Sciatic nerve (tissue), 2 donors: ENCODE measurements at regions of chr1 and their contacts with region 1.

Region 1: GRCh38 chr1:32773018-32773763 is 44.0 kb downstream of the YARS1 start:
- DNase-seq: peak; percentile 89
- ATAC-seq: peak; percentile 81

Region 2: DNA sequence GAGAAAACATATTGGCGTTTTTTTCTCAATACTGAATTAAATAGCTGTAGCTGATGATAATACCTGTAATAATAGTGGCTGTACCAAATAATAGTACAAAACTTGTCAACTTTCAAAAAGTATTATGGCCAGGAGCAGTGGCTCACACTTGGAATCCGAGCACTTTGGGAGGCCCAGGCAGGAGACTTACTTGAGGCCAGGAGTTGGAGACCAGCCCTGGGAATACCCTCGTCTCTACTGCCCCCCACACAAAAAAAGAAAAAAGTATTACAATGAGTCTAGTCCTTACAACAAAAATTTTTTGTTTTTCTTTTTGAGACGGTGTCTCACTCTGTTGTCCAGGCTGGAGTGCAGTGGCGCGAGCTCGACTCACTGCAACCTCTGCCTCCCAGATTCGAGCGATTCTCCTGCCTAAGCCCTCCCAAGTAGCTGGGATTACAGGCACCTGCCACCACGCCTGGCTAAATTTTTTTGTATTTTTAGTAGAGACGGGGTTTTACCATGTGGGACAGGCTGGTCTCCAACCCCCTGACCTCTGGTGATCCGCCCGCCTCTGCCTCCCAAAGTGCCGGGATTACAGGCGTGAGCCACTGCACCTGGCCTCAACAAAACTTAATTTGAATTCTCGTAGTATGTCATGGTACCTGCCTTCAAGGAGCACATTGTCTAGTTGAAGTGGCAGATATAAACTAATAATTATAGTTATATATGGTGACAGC is 120.8 kb before region 1 on chr1:
- intact Hi-C with region 1: no loop called
- DNase-seq: no peak
- ATAC-seq: no peak

Region 3: GRCh38 chr1:32714277-32714676 is 58.9 kb before region 1 on chr1:
- intact Hi-C with region 1: loop called (anchors 5 kb)
- DNase-seq: no peak
- ATAC-seq: no peak

Region 4: DNA sequence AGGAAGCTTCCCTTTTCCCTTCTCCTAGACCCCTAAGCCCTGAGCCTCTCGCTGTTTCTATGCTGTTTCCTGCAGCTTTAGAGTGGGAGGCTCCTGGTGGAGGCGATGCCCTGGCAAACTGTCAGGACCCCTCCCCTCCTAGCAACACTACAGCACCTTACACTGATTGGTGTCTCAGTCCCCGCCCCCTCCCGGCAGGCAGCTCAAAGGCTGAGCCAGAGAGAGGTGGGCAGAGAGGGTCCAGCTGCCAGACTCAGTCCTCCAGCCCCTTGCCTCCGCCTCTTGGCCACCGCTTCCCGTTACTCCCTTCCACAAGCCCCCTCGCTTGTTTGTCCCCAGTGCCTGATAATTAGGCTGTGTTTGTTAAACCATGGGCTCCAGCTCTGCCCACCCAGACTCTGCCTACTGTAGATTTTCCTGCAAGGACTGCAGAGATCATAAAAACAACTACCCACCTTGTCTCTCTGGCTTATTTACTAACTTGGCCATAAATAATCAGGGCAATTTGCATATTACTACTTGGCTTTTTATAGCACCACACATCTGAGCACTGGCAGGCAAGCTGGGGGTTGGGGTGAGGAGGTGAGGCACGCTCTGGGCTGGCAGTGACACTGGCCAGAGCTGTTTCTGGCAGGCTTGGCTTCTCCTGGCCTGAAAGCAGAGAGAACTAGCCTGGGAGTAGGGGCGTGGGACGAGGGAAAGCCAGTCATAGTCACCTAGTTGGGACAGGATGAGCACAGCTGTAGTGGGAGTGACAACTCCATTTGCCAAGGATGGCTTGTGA is 1284.3 kb after region 1 on chr1:
- intact Hi-C with region 1: loop called (anchors 10 kb)
- DNase-seq: no peak
- ATAC-seq: no peak